ENCODE measurements at regions of chr16 and their contacts with region 1.

Region 1: DNA sequence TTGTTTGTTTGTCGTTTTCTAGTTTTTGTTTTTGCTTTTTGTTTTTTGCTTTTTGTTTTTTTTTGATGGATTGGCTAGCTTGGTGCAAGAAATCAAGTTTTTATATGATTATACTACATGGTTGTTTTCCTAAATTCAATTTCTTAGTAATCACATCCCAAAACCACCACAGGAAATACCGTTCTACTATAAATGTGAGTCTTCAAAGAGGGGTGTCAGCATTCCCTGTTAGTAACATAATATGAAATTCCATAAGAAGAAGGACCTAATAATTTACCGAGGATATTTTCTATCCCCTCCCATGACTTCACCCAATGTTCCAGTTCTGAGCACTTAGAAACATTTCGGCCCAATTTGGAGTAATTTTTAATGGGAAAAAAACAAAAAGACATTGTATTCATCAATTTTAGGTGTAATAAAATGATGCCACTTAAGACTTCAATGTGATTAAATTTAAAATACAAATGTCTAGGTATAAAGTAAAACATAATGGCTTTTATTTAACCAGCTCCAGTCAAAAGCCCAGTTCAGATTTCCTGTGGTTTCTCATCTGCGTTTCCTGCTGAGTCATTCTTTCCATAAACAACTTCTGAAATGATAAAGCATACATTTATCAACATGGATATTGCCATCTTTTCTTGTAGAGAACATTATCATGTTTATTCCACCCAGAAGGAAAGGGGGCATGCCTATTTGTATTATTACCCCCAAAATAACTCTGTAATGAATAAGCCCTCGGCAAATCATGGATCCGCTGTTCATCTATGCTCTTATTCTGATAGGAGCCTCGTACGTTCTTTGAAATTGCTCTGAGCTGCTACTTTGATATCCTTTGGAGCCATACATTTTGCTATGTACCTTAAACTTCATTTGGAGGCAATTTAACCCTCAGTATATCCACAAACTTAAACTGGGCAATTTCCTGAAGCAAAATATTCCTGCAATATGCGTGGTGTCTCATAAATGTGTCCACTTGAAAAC is 28.1 kb downstream of the HSBP1 start:
- DNase-seq: peak; percentile 91
- H3K4me3 ChIP-seq: peak overlapping the region in 1 of 3 experiments; percentile 29
- H3K27ac ChIP-seq: peak overlapping the region; percentile 75
- H3K4me1 ChIP-seq: peaks cover 17% of the 10 kb centered on the region
- H3K27me3 ChIP-seq: peaks cover 0 to 4% of the 10 kb centered on the region in 2 experiments
- CTCF ChIP-seq: no peak
- POLR2A ChIP-seq: no peak

Region 2: GRCh38 chr16:83075956-83076355 is 759.9 kb before region 1 on chr16:
- CTCF ChIA-PET with region 1: no interaction called
- POLR2A ChIA-PET with region 1: no interaction called
- dilution Hi-C with region 1: no loop called
- intact Hi-C with region 1: no loop called
- DNase-seq: no peak
- H3K4me3 ChIP-seq: no peak overlapping the region
- H3K27ac ChIP-seq: no peak overlapping the region
- H3K4me1 ChIP-seq: peaks cover 9% of the 10 kb centered on the region
- H3K27me3 ChIP-seq: no peaks in the 10 kb centered on the region
- CTCF ChIP-seq: no peak
- POLR2A ChIP-seq: no peak

Region 3: DNA sequence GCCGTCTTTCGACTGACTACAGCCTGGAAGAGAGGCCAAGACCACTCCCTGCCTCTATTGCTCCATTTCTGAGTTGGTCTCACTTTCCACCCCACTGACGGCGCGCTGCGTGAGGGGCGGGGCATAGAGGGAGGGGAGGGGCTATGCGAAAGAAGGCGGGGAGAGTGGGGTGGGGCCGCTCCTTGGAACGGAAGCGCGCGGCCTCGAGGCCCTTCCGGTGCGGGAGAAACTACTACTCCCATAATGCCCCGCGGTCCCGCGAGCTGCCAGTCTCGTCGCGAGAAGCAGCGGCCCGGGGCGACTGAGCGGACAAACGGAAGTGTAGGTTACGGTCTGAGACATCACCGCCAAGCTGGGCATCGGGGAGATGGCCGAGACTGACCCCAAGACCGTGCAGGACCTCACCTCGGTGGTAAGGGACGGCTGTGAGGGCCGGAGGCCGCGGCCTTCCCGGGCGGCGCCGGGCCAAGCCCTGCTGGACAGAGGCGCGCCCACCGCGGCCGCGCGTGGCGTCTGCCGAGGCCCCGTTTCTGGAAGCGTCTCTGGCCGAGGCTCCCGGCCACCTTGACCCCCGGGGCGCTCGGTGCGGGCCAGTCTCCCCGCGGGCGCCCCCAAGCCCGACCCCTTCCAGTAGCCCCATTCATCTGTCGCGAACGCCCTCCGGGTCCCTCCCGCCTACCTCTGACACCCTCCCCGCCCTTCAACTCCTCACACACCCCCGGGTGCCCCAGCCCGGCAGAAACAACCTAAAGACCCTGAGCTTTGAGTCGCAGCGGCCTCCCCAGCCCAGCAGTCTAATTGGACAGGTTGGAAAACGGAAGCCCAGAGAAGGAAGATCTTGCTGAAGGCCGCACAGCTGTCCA is 27.9 kb before region 1 on chr16 and contains the start of gene HSBP1:
- CTCF ChIA-PET with region 1: no interaction called
- POLR2A ChIA-PET with region 1: no interaction called
- dilution Hi-C with region 1: no loop called
- intact Hi-C with region 1: loop called (anchors 2 kb)
- DNase-seq: peak; percentile 91
- H3K4me3 ChIP-seq: peak within 1 kb of the TSS; percentile 38 to 94 (median 66)
- H3K27ac ChIP-seq: peak within 1 kb of the TSS; percentile 32
- H3K4me1 ChIP-seq: peaks cover 7% of the 10 kb centered on the region
- H3K27me3 ChIP-seq: no peaks in the 10 kb centered on the region
- CTCF ChIP-seq: peak in 1 of 2 donors; percentile 0
- POLR2A ChIP-seq: peak; percentile 76
- total RNA-seq, gene HSBP1: 134 and 136 TPM in 2 replicates

Region 4: GRCh38 chr16:83898463-83899271 is 62.8 kb after region 1 on chr16 and contains the start of gene MLYCD:
- CTCF ChIA-PET with region 1: interaction called, 3 read pairs
- POLR2A ChIA-PET with region 1: no interaction called
- dilution Hi-C with region 1: no loop called
- intact Hi-C with region 1: loop called (anchors 5 kb)
- DNase-seq: peak; percentile 68
- H3K4me3 ChIP-seq: peak within 1 kb of the TSS; percentile 9 to 55 (median 45)
- H3K27ac ChIP-seq: peak within 1 kb of the TSS; percentile 60
- H3K4me1 ChIP-seq: peaks cover 10% of the 10 kb centered on the region
- H3K27me3 ChIP-seq: no peaks in the 10 kb centered on the region
- CTCF ChIP-seq: no peak
- POLR2A ChIP-seq: peak; percentile 52
- total RNA-seq, gene MLYCD: 2.8 and 3.4 TPM in 2 replicates